ENCODE measurements at regions of chr3 and their contacts with region 1.

Region 1: DNA sequence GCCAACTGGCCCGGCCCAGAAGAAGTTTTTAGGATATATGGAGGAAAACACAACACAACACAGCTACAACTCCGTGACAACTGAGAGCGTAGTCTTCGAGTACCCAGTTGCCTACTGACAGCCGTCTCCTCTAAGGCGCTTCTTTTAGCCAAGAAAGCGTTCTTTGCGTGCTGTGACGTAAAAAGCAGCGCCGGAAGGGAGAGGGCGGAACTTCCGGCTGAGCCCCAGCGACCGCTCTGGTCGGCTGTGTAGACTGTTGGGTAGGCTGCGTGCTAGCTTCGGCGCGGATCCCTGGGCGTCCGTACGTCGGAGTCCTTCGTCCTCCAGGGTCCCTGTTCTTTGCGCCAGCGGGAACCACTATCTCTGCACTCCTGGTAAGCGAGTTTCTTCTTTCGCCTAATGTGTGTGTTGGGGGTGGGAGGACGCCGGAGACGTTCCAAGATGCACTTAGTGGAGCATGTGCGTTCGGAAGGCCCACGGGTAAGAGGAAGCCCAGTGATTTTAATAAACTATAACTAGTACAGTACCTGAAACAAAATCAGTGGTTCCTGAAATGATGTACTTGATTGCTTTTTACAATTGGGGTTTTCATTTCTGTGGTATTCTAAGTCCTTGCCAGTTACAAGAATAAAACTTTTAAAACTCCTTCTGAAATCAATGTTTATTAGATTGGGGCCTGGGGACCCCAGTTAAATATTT is at the start of gene TRMT10C:
- DNase-seq: peak; percentile 95
- H3K4me3 Mint-ChIP-seq: peak within 1 kb of the TSS; percentile 97
- H3K27ac Mint-ChIP-seq: peak within 1 kb of the TSS; percentile 98
- H3K4me1 Mint-ChIP-seq: peaks cover 41% of the 10 kb centered on the region
- H3K27me3 Mint-ChIP-seq: peaks cover 5% of the 10 kb centered on the region

Region 2: DNA sequence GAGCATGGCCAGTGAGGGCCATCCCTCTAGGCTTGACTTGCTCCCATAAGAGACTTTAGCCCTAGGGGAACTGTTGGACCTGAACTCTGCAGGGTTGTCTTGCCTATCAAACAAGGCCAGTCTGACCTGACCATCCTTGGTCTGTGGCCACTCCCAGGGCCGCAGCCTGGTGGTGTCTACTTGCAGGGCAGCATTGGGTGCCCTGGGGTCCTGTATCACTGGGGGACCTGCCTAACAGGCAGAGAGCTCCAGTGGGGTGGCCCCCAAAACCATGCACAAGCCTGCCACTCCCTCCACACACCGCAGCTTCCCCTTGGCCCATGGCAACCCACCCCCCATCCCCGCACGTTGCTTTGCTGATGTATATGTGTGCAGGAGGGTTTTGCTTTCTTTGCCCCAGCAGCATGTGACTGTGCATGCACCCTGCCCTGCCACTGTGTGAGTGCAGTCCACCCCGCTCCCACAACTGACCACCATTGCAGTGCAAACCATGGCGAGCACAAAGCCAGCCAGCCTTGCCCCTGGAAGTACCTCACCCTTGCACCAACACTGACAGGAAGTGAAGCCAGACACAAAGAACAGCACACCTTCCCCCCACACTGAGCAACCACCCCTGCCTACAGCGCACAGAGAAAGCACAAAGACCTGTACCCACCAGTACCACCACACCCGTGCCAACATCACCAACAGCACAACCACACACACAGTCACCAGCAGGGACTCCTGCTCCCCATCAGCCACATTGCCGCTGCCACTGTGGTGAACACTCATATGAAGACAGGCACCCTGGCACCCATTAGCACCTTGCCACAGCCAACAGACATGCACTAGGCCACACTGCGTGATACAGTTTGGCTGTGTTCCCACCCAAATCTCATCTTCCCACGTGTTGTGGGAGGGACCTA is 137.5 kb before region 1 on chr3:
- CTCF ChIA-PET with region 1: no interaction called
- DNase-seq: no peak
- H3K4me3 Mint-ChIP-seq: no peak overlapping the region
- H3K27ac Mint-ChIP-seq: no peak overlapping the region
- H3K4me1 Mint-ChIP-seq: peaks cover 25% of the 10 kb centered on the region
- H3K27me3 Mint-ChIP-seq: no peaks in the 10 kb centered on the region

Region 3: GRCh38 chr3:101573449-101574387 is 11.9 kb after region 1 on chr3 and contains the start of gene PCNP:
- CTCF ChIA-PET with region 1: interaction called, 10 read pairs
- DNase-seq: peak; percentile 100
- H3K4me3 Mint-ChIP-seq: peak within 1 kb of the TSS; percentile 99
- H3K27ac Mint-ChIP-seq: peak within 1 kb of the TSS; percentile 99
- H3K4me1 Mint-ChIP-seq: peaks cover 73% of the 10 kb centered on the region
- H3K27me3 Mint-ChIP-seq: no peaks in the 10 kb centered on the region